ENCODE measurements at regions of chr19 and their contacts with region 1.

Region 1: DNA sequence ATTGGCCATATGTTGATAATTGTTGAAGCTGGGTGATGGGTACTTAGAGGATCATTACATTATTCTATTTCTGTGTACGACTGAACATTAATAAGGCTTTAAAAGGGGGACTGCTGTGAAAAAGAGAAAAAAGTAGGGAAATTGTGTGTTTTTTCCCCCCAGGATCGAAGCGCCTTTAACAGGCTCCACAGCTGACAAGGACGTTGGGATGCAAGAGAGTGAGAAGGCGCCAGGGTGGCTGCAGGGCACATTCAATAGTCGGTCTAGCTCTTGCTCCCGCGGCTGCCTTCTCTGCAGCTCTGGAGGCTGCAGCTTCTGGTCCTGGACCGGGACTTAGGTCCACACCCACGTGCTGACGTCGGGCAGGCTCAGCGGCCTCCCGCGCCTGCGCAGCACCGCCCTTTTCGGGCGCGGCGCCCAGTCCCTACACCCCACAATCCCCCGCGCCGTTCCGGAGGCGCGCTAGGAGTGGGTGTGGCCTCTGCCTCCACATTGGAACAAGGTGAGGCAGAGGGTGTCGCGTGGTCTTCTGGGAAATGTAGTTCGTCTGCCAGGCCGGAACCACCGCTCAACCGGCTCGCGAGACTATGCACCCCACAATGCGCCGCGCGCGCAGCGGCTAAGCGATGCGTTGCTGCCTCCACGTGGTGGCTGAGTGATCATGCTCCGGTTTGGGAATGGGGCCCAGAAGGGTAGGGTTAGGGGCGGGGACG is 4.9 kb upstream of the LRFN3 start:
- DNase-seq: peak; percentile 97 to 100 (median 99)
- ATAC-seq: peak; percentile 98
- H3K4me3 ChIP-seq: peak overlapping the region; percentile 43 to 56
- H3K4me3 Mint-ChIP-seq: peak overlapping the region; percentile 48
- H3K27ac ChIP-seq: peak overlapping the region; percentile 64 to 84
- H3K27ac Mint-ChIP-seq: peak overlapping the region; percentile 89
- H3K4me1 ChIP-seq: peaks cover 43% of the 10 kb centered on the region
- H3K4me1 Mint-ChIP-seq: peaks cover 47% of the 10 kb centered on the region
- H3K27me3 ChIP-seq: no peaks in the 10 kb centered on the region
- H3K27me3 Mint-ChIP-seq: no peaks in the 10 kb centered on the region
- CTCF ChIP-seq: peak; percentile 85

Region 2: GRCh38 chr19:35693830-35694599 is 237.3 kb before region 1 on chr19:
- CTCF ChIA-PET with region 1: no interaction called
- POLR2A ChIA-PET with region 1: no interaction called
- intact Hi-C with region 1: loop called (anchors 1 kb)
- DNase-seq: peak; percentile 80 to 94 (median 91)
- ATAC-seq: peak; percentile 100
- H3K4me3 ChIP-seq: no peak overlapping the region
- H3K4me3 Mint-ChIP-seq: no peak overlapping the region
- H3K27ac ChIP-seq: no peak overlapping the region
- H3K27ac Mint-ChIP-seq: no peak overlapping the region
- H3K4me1 ChIP-seq: no peaks in the 10 kb centered on the region
- H3K4me1 Mint-ChIP-seq: no peaks in the 10 kb centered on the region
- H3K27me3 ChIP-seq: no peaks in the 10 kb centered on the region
- H3K27me3 Mint-ChIP-seq: no peaks in the 10 kb centered on the region
- CTCF ChIP-seq: peak; percentile 99

Region 3: GRCh38 chr19:35748106-35749020 is 183.0 kb before region 1 on chr19 and contains the start of gene LIN37:
- CTCF ChIA-PET with region 1: no interaction called
- POLR2A ChIA-PET with region 1: no interaction called
- intact Hi-C with region 1: loop called (anchors 1 kb)
- DNase-seq: peak; percentile 97 to 100 (median 98)
- ATAC-seq: peak; percentile 72
- H3K4me3 ChIP-seq: peak within 1 kb of the TSS; percentile 84 to 99
- H3K4me3 Mint-ChIP-seq: peak within 1 kb of the TSS; percentile 98
- H3K27ac ChIP-seq: peak within 1 kb of the TSS; percentile 71 to 84
- H3K27ac Mint-ChIP-seq: peak within 1 kb of the TSS; percentile 95
- H3K4me1 ChIP-seq: peaks cover 41% of the 10 kb centered on the region
- H3K4me1 Mint-ChIP-seq: peaks cover 44% of the 10 kb centered on the region
- H3K27me3 ChIP-seq: no peaks in the 10 kb centered on the region
- H3K27me3 Mint-ChIP-seq: no peaks in the 10 kb centered on the region
- CTCF ChIP-seq: no peak
- total RNA-seq, gene LIN37: 5.5 to 9.3 TPM

Region 4: DNA sequence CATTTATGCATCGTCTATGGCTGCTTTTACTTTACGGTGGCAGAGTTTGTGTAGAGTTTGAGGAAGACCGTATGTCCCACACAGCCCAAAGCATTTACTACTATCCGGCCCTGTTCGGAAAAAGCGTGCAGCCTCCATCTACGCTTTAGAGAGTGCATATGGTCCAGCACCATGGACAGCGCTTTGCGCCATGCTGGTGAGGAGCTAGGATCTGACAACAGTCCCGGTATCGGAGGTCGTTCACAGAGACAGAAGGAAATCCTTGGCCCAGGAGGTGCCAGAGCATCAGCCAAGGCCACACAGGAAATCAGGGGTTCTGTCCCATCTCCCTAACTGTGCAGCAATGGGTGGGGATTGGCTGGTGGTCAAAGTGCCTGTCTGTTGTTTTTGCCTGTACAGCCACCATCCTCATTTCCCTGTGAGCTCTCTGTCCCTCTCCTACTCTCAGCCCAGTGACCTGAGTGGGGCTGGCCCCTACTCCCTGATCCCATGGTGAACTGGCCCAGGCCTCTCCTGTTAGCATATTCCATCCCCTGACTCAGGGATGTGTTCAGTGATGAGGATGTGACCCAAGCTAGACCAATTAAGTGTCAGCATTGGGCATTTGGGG is 102.5 kb before region 1 on chr19:
- CTCF ChIA-PET with region 1: no interaction called
- POLR2A ChIA-PET with region 1: no interaction called
- intact Hi-C with region 1: no loop called
- DNase-seq: peak in 7 of 9 experiments; percentile 30 to 64 (median 51)
- ATAC-seq: no peak
- H3K4me3 ChIP-seq: no peak overlapping the region
- H3K4me3 Mint-ChIP-seq: no peak overlapping the region
- H3K27ac ChIP-seq: no peak overlapping the region
- H3K27ac Mint-ChIP-seq: no peak overlapping the region
- H3K4me1 ChIP-seq: no peaks in the 10 kb centered on the region
- H3K4me1 Mint-ChIP-seq: no peaks in the 10 kb centered on the region
- H3K27me3 ChIP-seq: peaks cover 0 to under 1% of the 10 kb centered on the region in 2 experiments
- H3K27me3 Mint-ChIP-seq: peaks cover 29% of the 10 kb centered on the region
- CTCF ChIP-seq: no peak

Region 5: GRCh38 chr19:35882114-35882832 is 49.0 kb before region 1 on chr19:
- CTCF ChIA-PET with region 1: interaction called, 135 read pairs
- POLR2A ChIA-PET with region 1: interaction called, 22 read pairs
- intact Hi-C with region 1: loop called (anchors 1 kb)
- DNase-seq: peak in 3 of 9 experiments; percentile 45 to 83 (median 75)
- ATAC-seq: peak; percentile 68
- H3K4me3 ChIP-seq: no peak overlapping the region
- H3K4me3 Mint-ChIP-seq: no peak overlapping the region
- H3K27ac ChIP-seq: no peak overlapping the region
- H3K27ac Mint-ChIP-seq: no peak overlapping the region
- H3K4me1 ChIP-seq: peaks cover 11% of the 10 kb centered on the region
- H3K4me1 Mint-ChIP-seq: peaks cover 8% of the 10 kb centered on the region
- H3K27me3 ChIP-seq: peaks cover 5 to 20% of the 10 kb centered on the region in 2 experiments
- H3K27me3 Mint-ChIP-seq: peaks cover 16% of the 10 kb centered on the region
- CTCF ChIP-seq: peak; percentile 81

Region 6: DNA sequence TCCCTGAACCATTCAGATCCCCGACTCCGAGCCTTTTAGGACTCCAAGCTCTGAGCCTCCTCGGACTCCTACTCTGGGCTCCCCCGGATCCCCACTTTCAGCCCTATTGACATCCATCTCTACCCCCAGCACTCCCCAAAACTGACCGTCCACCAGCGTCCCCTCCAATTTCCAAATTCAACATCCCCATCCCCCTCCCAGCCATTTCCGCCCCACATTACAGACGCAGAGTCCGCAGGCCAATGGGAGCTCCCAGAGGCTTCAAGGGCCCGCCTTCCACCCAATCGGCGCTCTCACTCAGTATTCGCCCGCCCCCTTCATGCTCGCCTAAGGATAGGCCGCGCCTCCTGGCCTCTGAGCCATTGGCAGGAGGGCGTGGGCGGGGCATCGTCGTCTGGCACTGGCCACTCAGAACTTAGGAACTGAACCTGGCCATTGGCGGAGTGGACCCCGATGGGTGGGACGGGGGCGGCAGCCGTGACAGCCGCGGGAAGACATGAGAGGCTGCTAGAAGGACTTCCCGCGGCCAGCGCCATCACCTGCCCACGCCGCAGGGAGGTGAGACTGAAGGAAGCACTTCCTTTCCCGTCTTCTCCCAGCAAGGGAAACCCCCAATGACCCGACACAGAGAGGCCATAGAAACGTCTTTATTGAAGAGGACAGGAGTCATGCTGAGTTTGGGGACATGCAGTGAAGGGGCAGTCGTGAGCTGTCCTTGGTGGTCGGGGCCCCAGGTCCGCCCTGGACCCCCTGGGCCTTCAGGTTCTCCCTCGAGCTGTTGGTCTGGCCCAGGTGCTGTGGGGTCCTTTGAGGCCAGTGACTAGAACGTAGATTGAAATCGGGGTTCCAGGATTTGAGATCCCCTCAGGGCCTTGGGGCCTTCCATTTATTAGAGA is 83.0 kb after region 1 on chr19 and contains the start of gene ALKBH6:
- CTCF ChIA-PET with region 1: no interaction called
- POLR2A ChIA-PET with region 1: no interaction called
- intact Hi-C with region 1: loop called in 1 of 2 experiments (anchors 1 kb)
- DNase-seq: peak; percentile 98 to 99 (median 99)
- ATAC-seq: peak; percentile 98
- H3K4me3 ChIP-seq: peak within 1 kb of the TSS; percentile 73 to 80
- H3K4me3 Mint-ChIP-seq: peak within 1 kb of the TSS; percentile 91
- H3K27ac ChIP-seq: peak within 1 kb of the TSS; percentile 82 to 85
- H3K27ac Mint-ChIP-seq: peak within 1 kb of the TSS; percentile 91
- H3K4me1 ChIP-seq: peaks cover 23% of the 10 kb centered on the region
- H3K4me1 Mint-ChIP-seq: peaks cover 43% of the 10 kb centered on the region
- H3K27me3 ChIP-seq: no peaks in the 10 kb centered on the region
- H3K27me3 Mint-ChIP-seq: no peaks in the 10 kb centered on the region
- CTCF ChIP-seq: no peak
- total RNA-seq, gene ALKBH6: 28.8 to 34.1 TPM

Region 7: GRCh38 chr19:36246006-36246481 is 314.7 kb after region 1 on chr19:
- CTCF ChIA-PET with region 1: no interaction called
- POLR2A ChIA-PET with region 1: no interaction called
- intact Hi-C with region 1: no loop called
- DNase-seq: no peak
- ATAC-seq: no peak
- H3K4me3 ChIP-seq: no peak overlapping the region
- H3K4me3 Mint-ChIP-seq: no peak overlapping the region
- H3K27ac ChIP-seq: no peak overlapping the region
- H3K27ac Mint-ChIP-seq: no peak overlapping the region
- H3K4me1 ChIP-seq: no peaks in the 10 kb centered on the region
- H3K4me1 Mint-ChIP-seq: peaks cover 5% of the 10 kb centered on the region
- H3K27me3 ChIP-seq: no peaks in the 10 kb centered on the region
- H3K27me3 Mint-ChIP-seq: peaks cover 4% of the 10 kb centered on the region
- CTCF ChIP-seq: no peak